A673 (cell line): ENCODE measurements at regions of chr3 and their contacts with region 1.

Region 1: GRCh38 chr3:12273045-12273695 is 15.7 kb upstream of the PPARG start:
- DNase-seq: no peak
- H3K4me3 ChIP-seq: no peak overlapping the region
- H3K27ac ChIP-seq: no peak overlapping the region
- H3K4me1 ChIP-seq: no peaks in the 10 kb centered on the region
- H3K27me3 ChIP-seq: no peaks in the 10 kb centered on the region
- CTCF ChIP-seq: no peak

Region 2: GRCh38 chr3:12155823-12156222 is 117.3 kb before region 1 on chr3:
- CTCF ChIA-PET with region 1: interaction called, 10 read pairs
- POLR2A ChIA-PET with region 1: no interaction called
- intact Hi-C with region 1: no loop called
- DNase-seq: no peak
- H3K4me3 ChIP-seq: no peak overlapping the region
- H3K27ac ChIP-seq: no peak overlapping the region
- H3K4me1 ChIP-seq: peaks cover 23% of the 10 kb centered on the region
- H3K27me3 ChIP-seq: no peaks in the 10 kb centered on the region
- CTCF ChIP-seq: no peak